Cardiac septum (tissue), 1 donor: ENCODE measurements at regions of chr4 and their contacts with region 1.

Region 1: DNA sequence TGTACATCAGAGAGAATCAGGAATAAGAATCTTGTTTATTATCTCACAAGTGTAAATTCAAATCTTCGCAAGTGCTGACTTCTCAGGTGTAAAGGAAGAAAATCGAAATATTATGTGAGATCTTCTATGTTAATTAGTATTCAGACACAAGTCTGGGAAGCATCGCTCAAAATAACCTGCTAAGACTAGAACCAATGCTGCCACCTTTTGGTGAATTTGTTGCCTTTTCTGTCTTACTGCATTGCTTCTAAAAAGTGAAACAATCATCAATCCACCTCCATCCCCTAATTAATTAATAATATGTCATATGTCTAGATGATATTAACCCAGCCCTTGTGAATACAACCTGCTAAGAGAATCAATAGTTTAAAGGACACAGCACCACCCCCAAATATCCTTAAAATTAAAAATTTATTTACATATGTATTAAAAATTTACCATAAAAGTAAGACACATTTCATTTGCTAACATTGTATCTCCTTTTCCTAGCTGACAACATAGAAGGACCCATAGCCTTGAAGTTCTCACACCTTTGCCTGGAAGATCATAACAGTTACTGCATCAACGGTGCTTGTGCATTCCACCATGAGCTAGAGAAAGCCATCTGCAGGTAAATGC is 3.5 kb downstream of the EPGN start:
- DNase-seq: no peak

Region 2: GRCh38 chr4:74189331-74190043 is 122.3 kb before region 1 on chr4:
- intact Hi-C with region 1: loop called (anchors 2 kb)
- DNase-seq: no peak

Region 3: GRCh38 chr4:74228691-74229640 is 82.8 kb before region 1 on chr4:
- intact Hi-C with region 1: loop called (anchors 2 kb)
- DNase-seq: no peak

Region 4: GRCh38 chr4:74353858-74354257 is 42.1 kb after region 1 on chr4:
- intact Hi-C with region 1: no loop called
- DNase-seq: no peak

Region 5: DNA sequence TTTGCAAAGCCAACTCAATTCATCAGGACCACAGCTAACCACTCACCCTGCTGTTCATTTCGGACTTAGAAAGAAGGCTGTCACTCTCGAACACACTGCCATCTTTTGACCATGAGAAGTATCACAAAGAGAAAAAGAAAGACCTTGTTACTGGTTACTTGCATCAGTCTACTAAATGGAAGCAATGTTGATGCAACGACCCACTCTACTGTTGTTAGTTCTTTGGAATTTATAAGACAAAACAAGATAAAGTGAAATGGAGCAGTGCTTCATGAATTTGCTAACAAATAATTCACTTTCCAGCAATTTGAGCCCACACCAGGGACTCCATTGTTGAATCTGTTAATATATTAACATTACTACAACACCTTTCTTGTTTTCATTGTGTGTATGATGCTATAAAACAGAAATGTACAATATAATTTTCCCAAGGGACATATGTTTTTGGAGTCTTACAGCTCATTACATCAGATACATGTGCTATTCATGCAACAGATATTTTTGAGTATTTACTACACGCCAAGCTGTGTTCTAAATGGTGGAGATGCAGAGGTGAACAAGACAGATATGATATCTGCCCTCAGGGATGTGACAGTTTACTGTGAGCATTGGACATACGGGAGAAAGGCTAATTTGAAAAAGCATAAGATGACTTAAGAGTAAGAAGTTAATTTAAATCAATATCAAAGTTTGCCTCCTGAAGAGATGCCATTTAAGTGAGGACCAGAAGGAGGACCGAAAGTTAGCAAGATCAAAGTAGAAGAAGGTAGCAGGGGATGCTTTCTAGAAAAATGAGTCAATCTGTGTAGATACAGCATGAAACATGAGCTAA is 220.4 kb after region 1 on chr4:
- intact Hi-C with region 1: no loop called
- DNase-seq: no peak